CD4-positive, alpha-beta memory T cell (primary cell): ENCODE measurements at regions of chr19 and their contacts with region 1.

Region 1: DNA sequence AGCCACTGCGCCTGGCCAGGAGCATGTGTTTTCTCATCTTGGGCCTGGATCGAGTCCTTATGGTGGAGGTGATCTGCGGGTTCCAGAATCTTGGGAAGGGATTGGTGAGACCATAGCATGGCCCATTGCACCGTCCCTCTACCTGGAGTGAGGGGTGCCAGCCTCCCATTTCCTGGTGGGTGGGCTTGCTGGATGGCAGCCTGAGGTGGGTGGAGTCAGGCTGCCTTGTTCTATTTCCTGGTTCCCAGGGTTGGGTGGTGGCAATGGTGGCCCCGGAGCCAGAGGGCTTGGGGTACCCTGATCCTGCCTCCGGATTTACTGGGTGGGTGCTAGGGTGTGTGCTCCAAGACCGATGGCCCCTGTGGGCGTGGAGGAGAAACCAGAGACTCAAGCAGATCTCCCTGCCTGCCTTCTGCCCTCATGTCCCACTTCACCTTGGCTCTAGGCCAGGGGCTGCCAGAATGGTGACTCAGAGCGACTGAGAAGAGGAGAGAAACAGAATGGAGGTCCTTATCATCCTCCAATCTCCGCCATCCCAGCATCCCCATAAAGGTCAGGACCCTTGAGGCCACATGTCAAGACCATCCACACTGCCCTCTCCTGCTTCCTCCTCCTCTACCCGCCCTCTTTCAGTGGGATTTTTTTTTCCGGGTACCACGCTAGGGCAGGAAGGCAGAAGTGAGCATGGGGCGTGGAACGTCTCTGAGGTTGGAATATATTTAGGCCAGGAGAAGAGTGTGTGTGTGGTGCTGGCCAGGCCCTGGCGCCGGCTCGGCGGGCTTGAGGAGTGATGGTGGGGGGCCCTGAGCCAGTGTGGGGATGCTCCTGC is 22.1 kb downstream of the IER2 start:
- DNase-seq: peak; percentile 62 to 92 (median 63)
- H3K4me3 ChIP-seq: peak overlapping the region; percentile 18 to 46
- H3K4me3 Mint-ChIP-seq: peak overlapping the region; percentile 83 to 94 (median 86)
- H3K27ac ChIP-seq: peak overlapping the region; percentile 53
- H3K27ac Mint-ChIP-seq: peak overlapping the region; percentile 94 to 99 (median 98)
- H3K4me1 ChIP-seq: peaks cover 67% of the 10 kb centered on the region
- H3K4me1 Mint-ChIP-seq: peaks cover 37 to 78% (median 50%) of the 10 kb centered on the region in 4 donors
- H3K27me3 ChIP-seq: no peaks in the 10 kb centered on the region
- H3K27me3 Mint-ChIP-seq: no peaks in the 10 kb centered on the region

Region 2: DNA sequence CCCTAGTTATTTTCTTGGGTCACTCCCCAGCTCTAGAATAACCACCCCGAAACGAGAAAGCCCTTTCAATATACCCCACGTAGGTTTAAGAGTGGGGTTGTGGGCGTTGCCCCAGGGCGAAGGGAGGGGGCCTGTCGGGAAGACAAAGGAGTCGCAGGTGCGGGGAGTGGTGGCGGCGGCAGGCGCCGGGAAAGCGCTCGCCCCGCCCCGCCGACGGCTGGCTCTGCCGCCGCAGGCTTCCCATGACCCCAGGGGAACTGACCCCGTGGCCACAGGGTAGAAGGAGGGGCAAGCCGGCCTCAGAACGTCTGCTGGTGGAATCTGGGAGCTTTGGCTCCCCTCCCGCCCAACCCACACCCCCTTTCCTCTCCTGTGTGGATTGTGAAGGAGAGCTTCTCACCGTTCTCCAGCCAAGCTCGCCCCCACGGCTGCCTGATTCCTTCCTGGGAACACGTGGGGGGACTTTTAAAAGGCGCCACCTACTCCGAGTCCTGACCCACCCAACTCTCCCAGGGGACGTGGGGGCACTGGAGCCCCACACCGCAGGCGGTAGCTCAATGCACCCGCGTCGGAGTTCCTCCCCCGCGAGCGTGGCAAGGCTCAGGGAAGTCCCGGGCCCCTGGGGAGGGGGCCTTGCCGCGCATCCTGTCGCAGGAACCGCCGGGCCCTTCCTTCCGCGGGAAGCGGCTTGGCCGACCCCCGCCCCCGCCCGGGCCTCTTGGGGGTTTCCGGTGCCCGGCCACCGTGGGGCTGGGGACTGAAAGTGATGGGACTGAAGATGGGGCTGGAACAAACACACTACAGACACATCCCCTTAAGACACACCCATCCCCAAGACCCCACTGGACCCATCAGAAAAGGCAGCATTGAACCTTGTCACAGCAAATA is 16.6 kb before region 1 on chr19:
- CTCF ChIA-PET with region 1: interaction called, 51 read pairs
- POLR2A ChIA-PET with region 1: interaction called, 415 read pairs
- intact Hi-C with region 1: loop called (anchors 1 kb)
- DNase-seq: peak; percentile 80 to 89 (median 83)
- H3K4me3 ChIP-seq: peak overlapping the region; percentile 98 to 100
- H3K4me3 Mint-ChIP-seq: peak overlapping the region; percentile 95 to 99 (median 99)
- H3K27ac ChIP-seq: peak overlapping the region; percentile 98
- H3K27ac Mint-ChIP-seq: peak overlapping the region; percentile 98 to 99 (median 99)
- H3K4me1 ChIP-seq: peaks cover 48% of the 10 kb centered on the region
- H3K4me1 Mint-ChIP-seq: peaks cover 27 to 77% (median 38%) of the 10 kb centered on the region in 4 donors
- H3K27me3 ChIP-seq: no peaks in the 10 kb centered on the region
- H3K27me3 Mint-ChIP-seq: peaks cover 0 to 3% of the 10 kb centered on the region in 2 donors

Region 3: DNA sequence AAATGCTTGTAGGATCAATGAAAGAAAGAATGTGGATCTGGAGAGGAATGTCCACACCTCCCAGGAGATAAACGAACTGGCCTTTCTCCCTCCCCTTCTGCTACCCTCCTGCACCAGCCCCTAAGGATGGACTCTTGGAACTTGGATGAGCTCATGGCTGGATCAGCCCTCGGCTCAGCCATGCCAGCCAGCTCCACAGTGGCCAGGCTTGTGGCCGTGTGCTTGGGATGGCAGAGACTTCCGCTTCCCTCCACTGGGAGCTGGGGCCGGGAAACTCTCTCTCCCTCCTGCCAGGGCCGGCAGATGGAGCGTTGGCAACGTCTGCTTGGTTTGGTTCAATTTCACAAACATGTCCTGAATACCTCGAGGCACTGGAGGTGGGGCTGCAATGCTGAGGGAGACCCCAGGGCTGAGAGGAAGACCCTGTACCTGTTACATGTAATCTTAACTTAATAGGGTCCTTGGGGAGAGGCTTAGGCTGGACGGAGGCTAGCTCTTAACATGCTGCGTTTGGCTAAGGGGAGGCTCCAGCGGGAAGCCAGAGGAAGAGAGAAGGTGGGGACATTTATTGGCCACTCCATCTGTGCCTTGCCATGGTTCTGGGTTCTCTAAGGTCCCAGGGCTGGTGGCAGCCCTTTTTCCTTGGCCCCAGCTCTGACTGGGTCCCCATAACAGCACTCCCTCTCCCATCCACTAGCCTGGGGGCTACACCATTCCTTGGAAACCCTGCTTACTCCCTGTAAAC is 130.4 kb after region 1 on chr19:
- CTCF ChIA-PET with region 1: no interaction called
- POLR2A ChIA-PET with region 1: no interaction called
- intact Hi-C with region 1: no loop called
- DNase-seq: no peak
- H3K4me3 ChIP-seq: no peak overlapping the region
- H3K4me3 Mint-ChIP-seq: no peak overlapping the region
- H3K27ac ChIP-seq: no peak overlapping the region
- H3K27ac Mint-ChIP-seq: no peak overlapping the region
- H3K4me1 ChIP-seq: no peaks in the 10 kb centered on the region
- H3K4me1 Mint-ChIP-seq: peaks cover 4 to 8% (median 5%) of the 10 kb centered on the region in 4 donors
- H3K27me3 ChIP-seq: no peaks in the 10 kb centered on the region
- H3K27me3 Mint-ChIP-seq: peaks cover 40 to 43% of the 10 kb centered on the region in 2 donors

Region 4: DNA sequence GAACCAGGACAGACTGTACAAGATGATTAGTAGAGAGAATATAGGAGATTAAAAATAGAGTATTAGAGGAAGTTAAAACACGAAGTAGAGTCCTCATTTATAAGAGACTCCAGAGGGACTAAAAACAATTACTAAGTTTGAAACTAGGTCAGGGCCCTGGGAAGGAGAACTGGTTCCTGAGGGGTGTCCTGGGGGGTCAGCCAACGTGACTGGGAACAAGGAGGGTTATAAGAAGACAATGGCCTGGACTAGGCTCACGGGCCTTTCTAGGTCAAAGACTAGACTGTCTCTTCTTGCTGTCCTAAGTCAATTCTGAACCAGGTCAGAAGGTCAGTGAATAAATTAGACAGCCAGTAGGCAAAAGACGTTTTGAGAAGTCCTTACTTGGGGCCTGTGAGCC is 143.2 kb after region 1 on chr19:
- CTCF ChIA-PET with region 1: no interaction called
- POLR2A ChIA-PET with region 1: no interaction called
- intact Hi-C with region 1: no loop called
- DNase-seq: no peak
- H3K4me3 ChIP-seq: no peak overlapping the region
- H3K4me3 Mint-ChIP-seq: no peak overlapping the region
- H3K27ac ChIP-seq: no peak overlapping the region
- H3K27ac Mint-ChIP-seq: no peak overlapping the region
- H3K4me1 ChIP-seq: no peaks in the 10 kb centered on the region
- H3K4me1 Mint-ChIP-seq: peaks cover 0 to 3% (median 0%) of the 10 kb centered on the region in 4 donors
- H3K27me3 ChIP-seq: no peaks in the 10 kb centered on the region
- H3K27me3 Mint-ChIP-seq: peaks cover 26 to 27% of the 10 kb centered on the region in 2 donors